ENCODE measurements at regions of chr18 and their contacts with region 1.

Region 1: DNA sequence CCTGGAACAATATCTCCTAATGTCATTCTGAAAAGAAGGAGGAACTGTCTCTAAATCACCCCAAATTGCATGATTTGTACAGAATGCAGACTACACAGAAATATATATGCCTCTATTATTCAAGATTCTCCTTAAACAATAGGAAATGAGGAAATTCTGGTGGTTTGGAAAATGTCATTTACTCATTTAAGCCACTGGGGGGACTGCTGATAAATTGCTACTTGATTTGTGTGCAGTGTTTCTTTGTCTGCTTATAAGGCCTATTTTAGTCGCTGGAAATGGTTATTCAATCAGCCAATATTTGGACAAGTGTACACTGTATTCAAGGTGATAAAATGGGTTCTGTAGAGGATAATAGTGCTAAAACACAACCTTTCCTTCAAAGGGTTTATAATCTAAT is 801.9 kb upstream of the CELF4 start:
- DNase-seq: no peak
- ATAC-seq: no peak
- H3K4me3 ChIP-seq: no peak overlapping the region
- H3K27ac ChIP-seq: no peak overlapping the region
- H3K4me1 ChIP-seq: no peaks in the 10 kb centered on the region
- H3K27me3 ChIP-seq: no peaks in the 10 kb centered on the region
- CTCF ChIP-seq: no peak
- POLR2A ChIP-seq: no peak

Region 2: GRCh38 chr18:38459131-38459994 is 91.9 kb after region 1 on chr18:
- in situ Hi-C with region 1: loop called in 1 of 4 experiments (anchors 25 kb)
- intact Hi-C with region 1: no loop called
- DNase-seq: no peak
- ATAC-seq: peak in 1 of 2 donors; percentile 14
- H3K4me3 ChIP-seq: no peak overlapping the region
- H3K27ac ChIP-seq: no peak overlapping the region
- H3K4me1 ChIP-seq: no peaks in the 10 kb centered on the region
- H3K27me3 ChIP-seq: no peaks in the 10 kb centered on the region
- CTCF ChIP-seq: no peak
- POLR2A ChIP-seq: no peak